ENCODE measurements at regions of chr1 and their contacts with region 1.

Region 1: GRCh38 chr1:205109269-205109668 is 12.5 kb downstream of the RBBP5 start:
- DNase-seq: no peak
- H3K4me3 Mint-ChIP-seq: no peak overlapping the region
- H3K27ac Mint-ChIP-seq: no peak overlapping the region
- H3K4me1 Mint-ChIP-seq: no peaks in the 10 kb centered on the region
- H3K27me3 Mint-ChIP-seq: no peaks in the 10 kb centered on the region

Region 2: DNA sequence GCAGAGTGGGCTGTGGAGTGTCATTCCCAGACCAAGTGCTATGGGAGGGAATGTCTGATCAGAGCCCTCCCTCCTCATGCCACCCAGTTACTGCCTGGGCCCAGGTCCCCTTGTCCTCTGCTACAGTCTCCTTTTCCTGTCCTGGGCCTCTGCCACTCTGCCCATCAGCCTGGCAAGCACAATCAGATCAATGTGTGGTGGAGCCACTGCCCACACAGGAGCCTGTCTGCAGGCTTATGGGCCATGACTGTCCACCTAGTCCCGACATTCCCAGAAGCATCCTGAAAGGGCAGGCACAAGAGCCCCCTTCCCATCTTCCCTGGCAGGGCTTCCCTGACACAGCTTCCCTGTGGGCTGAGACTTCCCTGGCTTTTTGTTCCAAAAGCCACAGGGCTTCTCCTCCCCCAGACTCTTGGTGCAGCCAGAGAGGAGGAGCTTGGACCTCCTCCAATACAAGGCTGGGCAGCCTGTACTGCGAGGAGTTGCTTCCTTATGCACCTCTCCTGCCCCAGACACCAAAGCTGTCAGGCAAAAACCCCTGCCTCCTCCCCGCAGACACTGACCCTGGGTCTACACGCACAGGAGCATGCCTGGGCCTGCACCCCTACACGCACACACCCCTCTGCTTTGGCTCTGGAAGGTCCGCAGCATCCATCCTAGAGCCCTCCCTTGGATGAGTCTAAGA is 95.4 kb before region 1 on chr1:
- CTCF ChIA-PET with region 1: no interaction called
- POLR2A ChIA-PET with region 1: no interaction called
- DNase-seq: no peak
- H3K4me3 Mint-ChIP-seq: no peak overlapping the region
- H3K27ac Mint-ChIP-seq: no peak overlapping the region
- H3K4me1 Mint-ChIP-seq: no peaks in the 10 kb centered on the region
- H3K27me3 Mint-ChIP-seq: no peaks in the 10 kb centered on the region

Region 3: DNA sequence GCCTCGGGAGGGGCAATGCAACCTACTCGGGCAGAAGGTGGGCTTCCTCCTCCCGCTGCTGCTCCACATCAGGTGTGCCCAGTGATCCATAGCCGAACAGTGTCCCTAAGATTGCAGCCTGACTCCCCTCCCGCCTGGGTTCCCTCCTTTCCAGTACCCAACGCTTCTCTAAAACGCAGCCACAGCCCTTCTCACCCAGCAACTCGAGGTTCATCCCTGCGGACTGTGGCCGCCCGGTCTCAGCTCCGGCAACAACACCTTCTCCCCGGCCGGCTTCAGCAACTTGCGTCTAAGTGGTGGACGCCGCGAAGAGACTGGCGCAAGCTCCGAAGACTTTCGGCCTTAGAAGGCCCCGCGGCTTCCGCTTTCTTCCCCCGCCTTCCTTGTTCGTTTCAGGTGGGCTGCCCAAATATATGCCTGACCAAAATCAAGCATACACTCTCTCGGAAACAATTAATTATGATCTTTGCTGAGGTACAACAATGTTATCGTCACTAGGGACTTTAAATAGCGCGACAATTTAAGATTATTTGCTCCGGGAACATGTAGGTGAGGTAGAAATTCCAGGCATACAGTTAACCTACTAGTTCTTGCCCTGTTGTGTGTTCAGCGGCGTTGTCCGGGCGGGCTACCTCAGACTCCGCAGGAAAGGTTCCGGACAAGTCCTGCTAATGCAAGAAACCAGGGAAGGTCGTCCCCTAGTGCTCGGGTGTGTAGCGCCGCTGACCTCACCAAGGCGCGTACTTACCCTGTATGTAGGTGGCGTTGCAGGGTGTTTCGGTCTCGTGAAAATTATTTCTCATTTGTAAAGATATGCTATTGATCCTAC is 12.6 kb after region 1 on chr1 and contains the start of gene RBBP5:
- CTCF ChIA-PET with region 1: interaction called, 12 read pairs
- POLR2A ChIA-PET with region 1: no interaction called
- DNase-seq: peak; percentile 95
- H3K4me3 Mint-ChIP-seq: peak within 1 kb of the TSS; percentile 96
- H3K27ac Mint-ChIP-seq: peak within 1 kb of the TSS; percentile 98
- H3K4me1 Mint-ChIP-seq: peaks cover 39% of the 10 kb centered on the region
- H3K27me3 Mint-ChIP-seq: no peaks in the 10 kb centered on the region
- total RNA-seq, gene RBBP5: 22.2 to 24.7 TPM